ENCODE measurements at regions of chr20 and their contacts with region 1.

Region 1: GRCh38 chr20:35771689-35772562 is at the start of gene PHF20:
- DNase-seq: peak; percentile 99
- ATAC-seq: peak; percentile 87
- total RNA-seq, gene PHF20: 36.7 TPM

Region 2: GRCh38 chr20:35816339-35816738 is 44.4 kb after region 1 on chr20:
- intact Hi-C with region 1: loop called (anchors 5 kb)
- DNase-seq: no peak
- ATAC-seq: no peak

Region 3: DNA sequence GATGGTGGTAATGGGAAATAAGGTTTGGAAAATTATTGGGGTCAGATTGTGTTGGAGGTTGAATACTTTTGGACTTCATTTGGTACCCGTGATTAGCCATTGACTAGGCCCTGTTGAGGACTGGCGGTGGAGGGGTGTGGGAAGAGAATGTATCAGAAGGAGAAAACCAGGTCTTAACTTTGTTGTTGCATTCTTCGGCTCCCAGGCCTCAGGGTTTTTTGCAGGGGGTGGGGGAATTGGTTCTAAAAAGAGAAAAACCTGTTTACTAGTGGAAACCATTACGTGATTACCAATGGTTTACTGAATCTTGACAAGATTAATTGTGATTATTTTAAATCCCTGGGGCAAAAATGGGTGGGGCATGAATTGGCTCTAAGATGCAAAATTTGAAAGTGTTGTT is 84.9 kb after region 1 on chr20:
- intact Hi-C with region 1: no loop called
- DNase-seq: no peak
- ATAC-seq: no peak